Activated naive CD8-positive, alpha-beta T cell treated with anti-CD3 and anti-CD28 coated beads, Interleukin-2, amount 10 ng/mL, durations not matched to agents 7 days and 5 days (primary cell): ENCODE measurements at regions of chr10 and their contacts with region 1.

Region 1: DNA sequence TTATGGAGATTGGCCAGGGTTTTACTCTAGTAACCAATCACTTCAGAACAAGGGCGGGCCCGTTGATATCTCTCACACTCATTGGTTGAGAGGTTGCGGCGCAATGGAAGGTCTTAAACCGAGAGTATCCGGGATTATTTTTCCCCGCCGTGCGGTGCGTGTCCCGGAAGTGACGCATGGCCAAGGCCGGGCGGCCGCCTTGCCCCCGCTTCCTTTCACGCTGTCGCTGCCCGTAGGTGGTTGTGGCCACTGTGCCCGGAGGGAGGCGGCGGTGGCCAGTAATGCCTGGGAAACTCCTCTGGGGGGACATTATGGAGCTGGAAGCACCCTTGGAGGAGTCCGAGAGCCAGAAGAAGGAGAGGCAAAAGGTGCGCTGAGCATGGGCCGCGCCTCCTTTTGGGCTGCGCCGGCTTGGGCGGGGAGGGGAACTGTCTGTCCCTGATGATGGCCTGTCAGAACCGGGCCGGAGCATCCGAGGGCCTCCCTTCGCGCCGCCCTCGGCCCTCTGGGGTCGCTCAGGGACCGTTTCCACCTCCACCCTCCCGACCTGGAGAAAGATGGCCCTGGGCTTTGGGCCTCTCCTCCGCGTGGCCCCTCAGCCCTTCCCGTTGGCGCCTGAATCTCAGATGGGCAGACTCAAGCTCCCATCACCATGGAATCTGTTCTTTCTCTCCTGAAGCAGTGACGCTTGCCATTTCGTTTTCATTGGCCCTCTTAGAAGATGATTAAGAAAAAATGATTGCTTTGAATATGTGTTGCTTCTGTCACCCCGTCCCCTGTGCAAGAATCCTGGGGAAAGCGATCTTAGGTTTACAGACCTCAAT is at the start of gene DDX50:
- DNase-seq: peak; percentile 92
- ATAC-seq: peak; percentile 98
- H3K4me3 Mint-ChIP-seq: peak within 1 kb of the TSS; percentile 91
- H3K27ac Mint-ChIP-seq: peak within 1 kb of the TSS; percentile 98
- H3K4me1 Mint-ChIP-seq: peaks cover 28% of the 10 kb centered on the region
- H3K27me3 Mint-ChIP-seq: no peaks in the 10 kb centered on the region
- total RNA-seq, gene DDX50: 49.3 to 51.4 TPM

Region 2: GRCh38 chr10:68955832-68956532 is 54.7 kb after region 1 on chr10 and contains the start of gene DDX21:
- POLR2A ChIA-PET with region 1: interaction called, 23 read pairs
- DNase-seq: peak; percentile 83
- ATAC-seq: peak; percentile 88
- H3K4me3 Mint-ChIP-seq: peak within 1 kb of the TSS; percentile 94
- H3K27ac Mint-ChIP-seq: peak within 1 kb of the TSS; percentile 97
- H3K4me1 Mint-ChIP-seq: peaks cover 25% of the 10 kb centered on the region
- H3K27me3 Mint-ChIP-seq: no peaks in the 10 kb centered on the region
- total RNA-seq, gene DDX21: 63.8 to 65.1 TPM